Aorta (tissue), 5 donors: ENCODE measurements at regions of chr12 and their contacts with region 1.

Region 1: DNA sequence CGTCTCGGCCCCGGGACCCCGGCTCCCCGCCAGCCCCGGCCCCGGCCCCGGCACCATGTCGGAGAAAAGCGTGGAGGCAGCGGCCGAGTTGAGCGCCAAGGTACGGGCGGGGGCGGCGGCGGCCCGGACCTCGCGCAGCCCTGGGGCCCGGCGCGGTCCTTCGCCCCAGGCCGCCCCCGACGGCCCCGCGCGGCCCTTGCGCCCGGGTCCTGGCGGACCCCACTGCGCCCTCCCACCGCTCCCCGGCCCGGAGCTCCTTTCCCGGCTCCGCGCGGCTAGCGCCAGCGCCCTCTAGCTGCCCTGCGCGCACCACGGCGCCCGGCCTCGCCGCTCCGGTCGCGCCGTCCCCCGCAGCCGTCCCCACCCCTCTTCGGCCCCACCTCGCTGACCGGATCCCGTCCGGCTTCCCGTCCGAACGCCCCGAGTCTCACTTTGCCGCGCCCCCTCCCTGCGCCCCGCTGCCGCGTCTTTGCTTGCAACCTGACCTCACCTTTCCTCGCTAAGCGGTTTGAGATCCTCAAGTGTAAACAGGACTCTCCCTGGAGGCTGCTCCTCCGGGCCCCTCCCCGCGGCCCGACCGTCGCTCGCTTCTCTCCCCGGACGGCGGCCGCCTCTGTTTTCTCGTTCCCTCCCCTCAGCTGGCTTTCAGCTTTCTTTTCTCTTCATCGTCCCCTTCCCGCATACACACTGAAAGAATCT is 637 bp downstream of the PTMS start:
- DNase-seq: peak; percentile 87 to 94
- ATAC-seq: peak; percentile 77
- H3K4me3 ChIP-seq: peak overlapping the region; percentile 54 to 94
- H3K27ac ChIP-seq: peak overlapping the region; percentile 74 to 91
- H3K4me1 ChIP-seq: no peaks in the 10 kb centered on the region
- H3K27me3 ChIP-seq: no peaks in the 10 kb centered on the region

Region 2: DNA sequence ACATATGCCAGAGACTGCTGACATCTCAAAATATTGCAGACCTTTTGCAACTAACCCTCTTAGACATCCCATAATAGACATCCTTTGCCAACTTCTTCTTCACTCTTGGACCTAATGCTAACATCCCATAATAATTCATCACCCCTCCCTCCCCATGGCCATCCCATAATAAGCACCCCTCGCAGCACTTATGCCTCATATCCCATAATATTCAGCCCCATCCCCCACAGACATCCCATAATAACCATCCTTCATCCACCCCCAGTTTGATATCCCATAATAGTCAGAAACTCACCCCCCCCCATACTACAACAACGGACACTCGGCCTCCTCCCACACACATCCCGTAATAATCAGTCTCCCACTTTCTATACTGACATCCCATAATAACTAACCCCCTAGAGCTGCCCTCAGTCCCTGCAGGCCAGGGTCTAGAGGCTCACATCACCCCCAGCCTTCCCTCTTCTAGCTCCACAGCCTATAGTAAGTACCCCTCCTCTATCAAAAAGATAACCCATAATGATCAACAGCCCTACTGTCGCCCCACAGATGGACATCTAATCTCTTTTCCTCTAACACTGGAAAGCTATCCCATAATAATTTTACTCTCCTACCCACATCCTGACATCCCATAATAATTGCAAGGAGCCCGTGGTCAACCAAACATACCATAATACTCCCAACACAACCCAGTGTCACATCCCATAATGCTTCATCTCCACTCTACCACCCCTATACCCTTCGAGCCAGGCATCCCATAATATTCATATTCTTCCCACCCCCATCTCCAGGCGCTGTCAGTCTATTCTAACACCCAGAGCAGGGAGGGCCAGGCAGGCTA is 158.8 kb before region 1 on chr12:
- intact Hi-C with region 1: loop called (anchors 5 to 10 kb)
- DNase-seq: no peak
- ATAC-seq: peak; percentile 24
- H3K4me3 ChIP-seq: no peak overlapping the region
- H3K27ac ChIP-seq: peak overlapping the region in 1 of 2 donors; percentile 54
- H3K4me1 ChIP-seq: peaks cover 2 to 3% of the 10 kb centered on the region in 2 donors
- H3K27me3 ChIP-seq: no peaks in the 10 kb centered on the region

Region 3: DNA sequence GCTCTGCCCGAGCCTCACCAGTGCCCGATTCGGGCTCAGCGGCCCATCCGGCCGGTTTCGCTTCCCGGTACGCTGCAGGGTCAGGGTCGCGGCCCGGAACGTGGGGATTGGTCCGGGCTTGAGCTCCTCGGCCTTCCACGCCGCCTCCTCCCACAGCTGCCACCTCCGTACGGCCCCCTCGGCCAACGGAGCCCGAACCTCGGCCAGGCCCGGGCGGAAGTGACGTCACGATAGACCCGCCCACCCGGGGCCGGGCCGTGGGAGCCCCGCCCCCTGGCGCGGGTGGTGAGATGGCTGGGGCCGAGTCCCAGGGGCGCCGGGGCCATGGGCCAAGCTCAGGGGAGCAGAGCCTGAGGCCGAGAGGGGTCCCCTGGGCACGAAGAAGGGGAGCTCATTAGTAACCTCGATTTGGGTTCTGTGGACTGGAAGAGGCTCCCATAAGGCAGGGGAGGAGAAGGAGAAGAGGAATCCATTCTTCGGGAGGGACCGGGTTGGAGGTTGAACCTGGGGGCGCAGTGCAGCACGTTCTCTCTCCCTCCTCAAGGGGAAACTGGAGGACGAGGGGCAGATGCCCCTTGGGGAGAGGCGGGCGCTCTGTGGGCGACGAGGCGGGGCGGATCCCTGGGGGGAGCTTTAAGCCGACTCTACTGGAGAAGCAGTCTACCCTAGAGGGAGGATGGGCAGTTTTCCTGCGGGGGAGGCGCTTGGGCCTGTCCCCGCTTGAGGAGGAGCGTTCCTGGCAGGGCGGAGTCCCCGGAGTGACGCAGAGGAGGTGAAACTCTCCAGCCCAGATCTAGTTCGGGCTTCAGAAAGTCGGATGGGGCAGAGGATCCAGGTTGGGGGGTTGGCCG is 13.7 kb before region 1 on chr12 and contains the start of gene MLF2:
- intact Hi-C with region 1: loop called in 1 of 2 experiments (anchors 1 kb)
- DNase-seq: peak; percentile 99
- ATAC-seq: peak; percentile 98
- H3K4me3 ChIP-seq: peak within 1 kb of the TSS; percentile 50 to 86
- H3K27ac ChIP-seq: peak within 1 kb of the TSS; percentile 62 to 96
- H3K4me1 ChIP-seq: no peaks in the 10 kb centered on the region
- H3K27me3 ChIP-seq: no peaks in the 10 kb centered on the region
- total RNA-seq, gene MLF2: 110 to 144 TPM

Region 4: DNA sequence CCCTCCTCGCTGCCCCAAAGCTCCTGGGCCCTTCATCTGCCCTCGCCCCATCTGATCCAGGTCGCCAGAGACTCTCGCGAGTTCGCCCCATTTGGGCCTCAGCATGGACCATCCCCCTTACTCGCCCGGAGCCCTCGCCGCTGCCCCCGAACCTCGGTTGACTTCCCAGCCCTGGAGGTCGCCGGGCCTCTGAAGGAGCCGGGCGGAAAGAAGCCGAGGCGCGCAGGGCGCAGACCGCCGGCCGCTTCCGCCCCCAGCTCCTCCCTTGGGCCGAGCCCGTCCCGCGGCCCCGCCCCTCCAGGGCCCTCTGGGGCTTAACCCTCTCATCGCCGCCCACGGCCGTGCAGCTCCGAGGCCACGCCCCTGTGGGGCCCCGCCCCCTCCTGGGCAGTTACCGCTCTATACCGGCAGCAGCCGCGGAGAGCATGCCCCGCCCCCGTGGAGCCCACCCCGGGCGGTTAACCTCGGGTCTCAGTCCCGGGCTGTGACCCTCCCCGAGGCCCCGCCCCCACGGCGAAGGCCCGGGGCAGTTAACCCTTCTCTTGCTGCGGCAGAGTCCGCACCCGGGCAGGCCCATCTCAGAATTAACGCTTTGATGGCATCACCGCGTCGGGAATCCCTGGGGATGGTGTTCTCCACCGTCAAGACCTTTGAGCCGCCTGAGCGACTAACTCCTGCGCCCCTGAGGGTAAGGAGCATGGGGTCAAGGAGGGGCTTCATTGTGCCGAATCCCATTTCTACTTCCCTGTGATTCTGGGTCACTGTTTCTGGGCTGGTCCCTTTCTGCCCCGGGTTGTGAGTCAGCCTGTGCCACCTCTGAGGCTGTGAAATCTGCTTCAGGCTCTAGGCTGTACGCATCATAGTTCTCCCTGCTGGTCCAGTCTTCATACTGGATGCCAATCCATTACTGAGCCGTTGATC is 106.6 kb after region 1 on chr12 and contains the start of gene SPSB2:
- intact Hi-C with region 1: loop called in 1 of 2 experiments (anchors 5 kb)
- DNase-seq: peak; percentile 100
- ATAC-seq: peak; percentile 98
- H3K4me3 ChIP-seq: peak within 1 kb of the TSS; percentile 71 to 80
- H3K27ac ChIP-seq: peak within 1 kb of the TSS in 1 of 2 donors; percentile 71
- H3K4me1 ChIP-seq: peaks cover 0 to 1% of the 10 kb centered on the region in 2 donors
- H3K27me3 ChIP-seq: no peaks in the 10 kb centered on the region
- total RNA-seq, gene SPSB2: 4.2 to 10.2 TPM